ENCODE measurements at regions of chr7 and their contacts with region 1.

Region 1: GRCh38 chr7:101924171-101924570 is 106.7 kb downstream of the CUX1 start:
- DNase-seq: peak in 4 of 5 donors; percentile 49 to 74 (median 62)
- ATAC-seq: peak; percentile 84 to 93 (median 90)
- H3K4me3 ChIP-seq: no peak overlapping the region
- H3K27ac ChIP-seq: peak overlapping the region in 11 of 12 donors; percentile 15 to 90 (median 81)
- H3K4me1 ChIP-seq: peaks cover 0 to 46% (median 24%) of the 10 kb centered on the region in 12 donors
- H3K27me3 ChIP-seq: no peaks in the 10 kb centered on the region
- CTCF ChIP-seq: no peak
- POLR2A ChIP-seq: peak in 1 of 2 donors; percentile 31

Region 2: GRCh38 chr7:101936611-101937231 is 12.6 kb after region 1 on chr7:
- intact Hi-C with region 1: loop called in 1 of 10 experiments (anchors 1 kb)
- DNase-seq: peak in 4 of 5 donors; percentile 40 to 64 (median 46)
- ATAC-seq: peak in 3 of 4 donors; percentile 29 to 47 (median 36)
- H3K4me3 ChIP-seq: peak overlapping the region in 11 of 12 donors; percentile 15 to 50 (median 38)
- H3K27ac ChIP-seq: peak overlapping the region; percentile 74 to 97 (median 88)
- H3K4me1 ChIP-seq: peaks cover 3 to 64% (median 53%) of the 10 kb centered on the region in 12 donors
- H3K27me3 ChIP-seq: no peaks in the 10 kb centered on the region
- CTCF ChIP-seq: no peak
- POLR2A ChIP-seq: no peak